ENCODE measurements at regions of chr5 and their contacts with region 1.

Region 1: GRCh38 chr5:54243473-54244080 is 66.8 kb downstream of the ARL15 start:
- DNase-seq: peak; percentile 57
- H3K4me3 Mint-ChIP-seq: no peak overlapping the region
- H3K27ac Mint-ChIP-seq: no peak overlapping the region
- H3K4me1 Mint-ChIP-seq: no peaks in the 10 kb centered on the region
- H3K27me3 Mint-ChIP-seq: no peaks in the 10 kb centered on the region
- CTCF ChIP-seq: peak; percentile 86

Region 2: GRCh38 chr5:53766673-53767072 is 476.9 kb before region 1 on chr5:
- CTCF ChIA-PET with region 1: no interaction called
- POLR2A ChIA-PET with region 1: no interaction called
- intact Hi-C with region 1: no loop called
- DNase-seq: no peak
- H3K4me3 Mint-ChIP-seq: no peak overlapping the region
- H3K27ac Mint-ChIP-seq: no peak overlapping the region
- H3K4me1 Mint-ChIP-seq: no peaks in the 10 kb centered on the region
- H3K27me3 Mint-ChIP-seq: no peaks in the 10 kb centered on the region
- CTCF ChIP-seq: no peak

Region 3: GRCh38 chr5:54254482-54255198 is 11.1 kb after region 1 on chr5:
- CTCF ChIA-PET with region 1: interaction called, 20 read pairs
- POLR2A ChIA-PET with region 1: interaction called, 5 read pairs
- intact Hi-C with region 1: no loop called
- DNase-seq: peak; percentile 14
- H3K4me3 Mint-ChIP-seq: no peak overlapping the region
- H3K27ac Mint-ChIP-seq: no peak overlapping the region
- H3K4me1 Mint-ChIP-seq: no peaks in the 10 kb centered on the region
- H3K27me3 Mint-ChIP-seq: no peaks in the 10 kb centered on the region
- CTCF ChIP-seq: no peak

Region 4: GRCh38 chr5:54415896-54416601 is 172.5 kb after region 1 on chr5:
- CTCF ChIA-PET with region 1: interaction called, 20 read pairs
- POLR2A ChIA-PET with region 1: no interaction called
- intact Hi-C with region 1: loop called (anchors 1 kb)
- DNase-seq: peak; percentile 26
- H3K4me3 Mint-ChIP-seq: no peak overlapping the region
- H3K27ac Mint-ChIP-seq: no peak overlapping the region
- H3K4me1 Mint-ChIP-seq: peaks cover 14% of the 10 kb centered on the region
- H3K27me3 Mint-ChIP-seq: no peaks in the 10 kb centered on the region
- CTCF ChIP-seq: no peak

Region 5: DNA sequence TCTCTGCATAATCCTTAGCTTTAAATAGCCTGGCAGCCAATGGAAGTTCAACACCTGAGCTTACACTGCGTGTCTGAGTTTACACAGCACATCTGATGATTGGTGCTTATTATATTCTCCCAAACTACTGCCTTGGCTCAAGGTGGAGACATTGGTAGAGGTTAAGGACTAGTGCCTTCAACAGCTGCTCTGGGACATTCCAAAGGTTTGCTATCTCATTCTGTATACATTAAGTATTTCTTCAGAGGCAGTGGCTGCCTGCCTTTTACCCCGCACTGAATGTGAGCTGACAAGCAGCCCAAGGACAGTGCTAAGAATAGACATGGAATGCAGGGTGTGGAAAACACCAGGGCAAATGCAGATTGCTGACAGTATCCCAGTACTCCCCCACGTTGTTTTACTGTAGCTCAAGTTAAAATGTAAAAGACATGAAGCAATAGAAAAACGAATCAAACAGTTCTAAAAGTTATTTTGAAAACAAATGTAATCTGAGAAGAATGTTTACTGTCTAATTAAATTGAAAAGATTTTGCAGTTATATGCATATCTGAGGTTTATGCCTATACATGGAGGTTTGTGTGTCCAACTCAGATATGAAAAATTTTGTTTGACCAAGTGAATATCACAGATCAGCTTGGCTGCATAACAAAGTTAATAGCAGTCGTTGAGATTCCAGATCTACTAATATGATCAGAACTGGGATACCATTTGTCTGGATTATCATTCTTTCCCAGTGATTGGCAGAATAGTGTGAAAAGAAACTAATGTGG is 213.7 kb after region 1 on chr5:
- CTCF ChIA-PET with region 1: interaction called, 17 read pairs
- POLR2A ChIA-PET with region 1: no interaction called
- intact Hi-C with region 1: no loop called
- DNase-seq: peak; percentile 60
- H3K4me3 Mint-ChIP-seq: no peak overlapping the region
- H3K27ac Mint-ChIP-seq: no peak overlapping the region
- H3K4me1 Mint-ChIP-seq: peaks cover 9% of the 10 kb centered on the region
- H3K27me3 Mint-ChIP-seq: no peaks in the 10 kb centered on the region
- CTCF ChIP-seq: no peak